Activated B cell treated with CpG ODN at 0.5 μM for 24 hours (primary cell): ENCODE measurements at regions of chr4 and their contacts with region 1.

Region 1: DNA sequence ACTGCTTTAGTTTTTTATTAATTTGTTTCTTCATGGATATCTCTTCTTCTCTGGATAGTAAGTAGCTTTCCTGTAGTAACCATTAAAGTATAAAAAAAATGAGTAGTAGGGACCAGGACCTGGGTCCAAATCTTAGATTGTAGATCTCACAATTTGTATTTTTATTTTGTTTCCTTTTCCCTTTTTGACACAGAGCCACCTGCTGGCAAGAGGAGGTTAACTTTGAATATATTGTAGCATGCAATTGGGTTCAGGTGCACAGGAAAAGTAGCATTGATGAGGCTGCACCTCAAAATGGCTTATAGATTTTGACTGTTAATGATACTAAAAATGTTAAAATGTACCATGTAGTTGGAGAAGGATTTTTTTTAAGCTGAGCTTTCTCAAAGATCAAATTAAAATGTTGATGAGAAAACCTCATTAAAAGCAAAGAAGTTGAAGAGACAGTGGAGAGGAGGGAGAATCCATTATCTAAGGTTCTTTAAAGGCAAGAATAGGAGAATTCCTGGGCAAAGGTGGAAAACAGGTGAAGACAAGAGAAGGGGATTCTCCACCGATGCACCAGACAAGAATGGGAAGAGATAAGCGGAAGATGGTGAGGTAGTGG is 48.3 kb upstream of the HPGDS start:
- DNase-seq: no peak
- ATAC-seq: no peak
- H3K4me3 Mint-ChIP-seq: no peak overlapping the region
- H3K27ac Mint-ChIP-seq: no peak overlapping the region
- H3K4me1 Mint-ChIP-seq: no peaks in the 10 kb centered on the region
- H3K27me3 Mint-ChIP-seq: peaks cover 19% of the 10 kb centered on the region
- CTCF ChIP-seq: no peak

Region 2: DNA sequence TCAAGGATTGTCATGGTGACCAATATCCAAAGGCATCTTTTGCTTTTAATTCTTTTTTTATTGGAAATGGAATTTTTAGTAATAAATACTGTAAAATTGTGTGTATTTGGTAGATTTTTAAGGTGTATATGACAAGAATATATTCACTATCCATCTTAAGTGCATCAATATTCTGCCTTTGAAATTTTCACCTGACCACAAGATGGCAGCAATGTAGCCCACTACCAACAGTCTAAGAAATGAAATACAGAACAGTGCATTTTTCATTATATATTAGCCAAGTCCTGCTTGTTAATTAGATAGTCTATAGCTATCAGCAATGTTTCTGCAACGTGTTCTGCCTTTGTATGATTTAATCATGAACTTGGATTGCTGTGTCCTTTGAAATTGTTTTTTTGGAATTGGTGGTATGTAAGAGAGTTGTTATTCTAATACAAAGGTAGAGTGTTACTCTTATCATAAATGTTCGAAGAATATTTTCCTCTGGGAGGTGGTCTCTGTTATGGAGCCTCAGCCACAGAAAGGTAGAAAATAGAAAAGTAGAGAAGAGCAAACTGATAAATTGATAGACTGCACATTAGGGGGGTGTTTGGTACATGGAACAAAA is 86.4 kb before region 1 on chr4:
- CTCF ChIA-PET with region 1: no interaction called
- POLR2A ChIA-PET with region 1: no interaction called
- intact Hi-C with region 1: loop called (anchors 1 kb)
- DNase-seq: no peak
- ATAC-seq: no peak
- H3K4me3 Mint-ChIP-seq: no peak overlapping the region
- H3K27ac Mint-ChIP-seq: no peak overlapping the region
- H3K4me1 Mint-ChIP-seq: no peaks in the 10 kb centered on the region
- H3K27me3 Mint-ChIP-seq: no peaks in the 10 kb centered on the region
- CTCF ChIP-seq: no peak

Region 3: DNA sequence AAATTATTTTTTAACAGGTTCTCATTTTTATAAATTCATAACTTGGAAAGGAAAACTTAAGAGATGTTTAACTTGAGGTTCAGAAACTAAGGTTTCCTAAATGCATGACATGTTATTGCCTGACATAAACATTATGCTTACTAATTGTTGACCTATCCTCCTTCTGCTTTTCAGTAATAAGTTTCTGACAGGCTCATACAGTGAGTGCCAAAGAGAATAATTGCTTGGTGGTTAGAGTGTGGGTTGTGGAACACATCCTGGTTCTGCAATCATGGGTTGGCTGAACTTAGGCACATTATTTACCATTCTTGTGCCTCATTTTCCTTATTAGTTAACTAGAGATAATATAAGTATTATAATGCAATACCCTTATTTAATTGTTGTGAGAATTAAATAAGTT is 423.3 kb after region 1 on chr4:
- CTCF ChIA-PET with region 1: no interaction called
- POLR2A ChIA-PET with region 1: no interaction called
- intact Hi-C with region 1: no loop called
- DNase-seq: no peak
- ATAC-seq: no peak
- H3K4me3 Mint-ChIP-seq: no peak overlapping the region
- H3K27ac Mint-ChIP-seq: no peak overlapping the region
- H3K4me1 Mint-ChIP-seq: no peaks in the 10 kb centered on the region
- H3K27me3 Mint-ChIP-seq: no peaks in the 10 kb centered on the region
- CTCF ChIP-seq: no peak